ENCODE measurements at regions of chr3 and their contacts with region 1.

Region 1: DNA sequence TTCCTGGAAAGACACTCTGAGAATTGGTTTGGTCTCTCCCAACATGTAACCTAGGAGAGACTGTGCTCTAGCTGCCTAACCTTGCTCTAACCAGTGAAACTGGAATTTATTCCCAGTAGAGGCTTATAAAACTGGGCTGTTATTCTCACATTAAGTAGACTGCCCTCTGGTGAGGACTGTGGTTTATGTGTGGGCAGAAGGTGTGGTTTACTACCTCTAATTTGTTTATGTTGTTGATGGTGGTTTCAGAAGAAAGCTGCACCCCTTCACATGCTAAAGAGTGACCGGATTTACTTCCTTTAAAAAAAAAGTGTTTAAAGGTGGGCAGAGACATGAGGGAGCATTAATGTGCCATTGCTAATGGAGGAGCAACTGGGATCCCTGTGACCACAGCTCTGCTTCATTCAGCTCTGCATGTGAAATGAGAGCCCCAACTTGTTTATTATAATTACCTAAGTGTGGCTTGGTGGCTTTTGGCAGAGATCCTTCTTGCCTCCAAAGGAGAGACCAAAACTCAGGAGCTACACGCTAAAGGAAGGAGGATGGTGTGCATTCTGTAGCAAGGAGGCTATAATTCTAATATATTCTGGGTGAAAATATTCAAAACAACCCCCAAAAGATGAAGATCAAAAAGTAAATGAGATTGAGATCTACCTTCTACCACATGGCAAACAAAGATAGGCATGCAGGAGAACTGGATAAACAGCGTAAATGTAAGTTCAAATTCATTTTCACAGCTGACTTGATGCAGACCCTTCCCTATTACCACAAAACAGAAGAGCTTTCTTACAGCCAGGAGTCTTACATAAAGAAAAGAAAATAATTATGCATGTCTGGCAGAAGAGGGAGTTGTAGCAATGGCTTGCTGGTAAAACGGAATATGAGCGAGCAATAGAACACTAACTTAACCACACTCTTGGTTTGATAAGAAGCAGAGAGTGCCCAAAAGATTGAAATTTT is 273.0 kb downstream of the MECOM start:
- DNase-seq: peak; percentile 66
- H3K4me3 Mint-ChIP-seq: peak overlapping the region; percentile 41
- H3K27ac Mint-ChIP-seq: peak overlapping the region; percentile 94
- H3K4me1 Mint-ChIP-seq: peaks cover 47% of the 10 kb centered on the region
- H3K27me3 Mint-ChIP-seq: no peaks in the 10 kb centered on the region
- CTCF ChIP-seq: peak; percentile 50

Region 2: DNA sequence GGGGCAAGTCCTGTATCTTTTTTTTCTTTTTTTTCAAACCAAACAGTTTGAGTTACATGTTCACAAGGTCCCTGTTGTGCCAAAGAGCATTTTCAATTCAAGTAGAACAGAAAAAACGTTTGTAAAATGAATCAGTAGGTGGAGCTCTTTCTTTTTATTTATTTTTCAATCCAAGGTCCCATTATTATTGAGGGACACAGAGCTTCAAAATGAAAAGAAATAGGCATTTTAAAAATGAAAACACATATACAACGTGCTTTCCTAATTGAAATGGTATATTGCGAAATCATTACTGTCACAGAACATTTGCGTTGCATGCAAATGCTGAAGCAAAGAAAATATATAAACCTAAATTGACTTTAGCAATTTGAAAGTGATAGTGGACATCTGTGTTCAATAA is 438.0 kb before region 1 on chr3:
- CTCF ChIA-PET with region 1: interaction called, 5 read pairs
- intact Hi-C with region 1: loop called (anchors 2 kb)
- DNase-seq: no peak
- H3K4me3 Mint-ChIP-seq: no peak overlapping the region
- H3K27ac Mint-ChIP-seq: peak overlapping the region; percentile 84
- H3K4me1 Mint-ChIP-seq: peaks cover 62% of the 10 kb centered on the region
- H3K27me3 Mint-ChIP-seq: no peaks in the 10 kb centered on the region
- CTCF ChIP-seq: no peak

Region 3: GRCh38 chr3:169286214-169286613 is 104.3 kb before region 1 on chr3:
- CTCF ChIA-PET with region 1: interaction called, 8 read pairs
- intact Hi-C with region 1: loop called (anchors 2 kb)
- DNase-seq: peak; percentile 66
- H3K4me3 Mint-ChIP-seq: peak overlapping the region; percentile 68
- H3K27ac Mint-ChIP-seq: peak overlapping the region; percentile 98
- H3K4me1 Mint-ChIP-seq: peaks cover 54% of the 10 kb centered on the region
- H3K27me3 Mint-ChIP-seq: no peaks in the 10 kb centered on the region
- CTCF ChIP-seq: no peak

Region 4: DNA sequence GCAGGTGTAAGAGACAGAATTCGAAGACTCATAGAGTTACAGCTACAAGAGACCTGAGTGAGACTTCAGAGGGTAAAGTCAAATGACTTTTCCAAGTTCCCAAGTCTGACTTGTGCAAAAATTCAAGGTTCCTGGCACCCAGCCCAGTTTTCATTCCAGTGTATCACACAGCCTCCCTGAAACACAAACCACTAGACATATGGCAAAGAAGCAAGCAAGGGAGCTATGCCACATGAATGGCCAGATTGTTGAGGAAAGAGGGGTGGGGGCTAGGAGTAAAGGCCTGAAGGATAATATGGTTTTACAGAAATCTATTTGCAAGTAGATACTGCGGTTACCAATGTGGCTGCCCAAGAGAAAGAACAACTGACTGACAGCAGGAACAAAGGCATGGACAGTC is 28.2 kb before region 1 on chr3:
- CTCF ChIA-PET with region 1: interaction called, 17 read pairs
- intact Hi-C with region 1: loop called (anchors 2 kb)
- DNase-seq: peak; percentile 87
- H3K4me3 Mint-ChIP-seq: peak overlapping the region; percentile 46
- H3K27ac Mint-ChIP-seq: peak overlapping the region; percentile 83
- H3K4me1 Mint-ChIP-seq: peaks cover 60% of the 10 kb centered on the region
- H3K27me3 Mint-ChIP-seq: no peaks in the 10 kb centered on the region
- CTCF ChIP-seq: no peak

Region 5: DNA sequence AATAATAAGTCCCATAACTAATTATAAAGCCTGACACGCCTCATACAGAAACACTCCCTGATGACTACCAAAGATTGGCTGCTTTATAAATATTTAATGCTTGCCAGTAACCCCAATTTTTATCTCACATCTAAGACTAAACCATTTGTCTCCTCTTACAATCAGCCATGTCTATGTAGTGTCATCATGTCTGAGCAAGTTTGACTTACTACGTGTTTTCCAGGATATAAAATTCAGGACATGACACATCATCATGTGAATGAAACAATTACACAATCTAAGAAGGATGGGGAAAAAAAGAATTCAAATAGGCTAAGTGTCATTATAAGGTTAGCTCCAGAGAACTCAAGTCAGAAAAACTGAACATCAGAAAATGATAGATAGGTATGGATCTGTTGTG is 64.3 kb after region 1 on chr3:
- CTCF ChIA-PET with region 1: no interaction called
- intact Hi-C with region 1: no loop called
- DNase-seq: no peak
- H3K4me3 Mint-ChIP-seq: no peak overlapping the region
- H3K27ac Mint-ChIP-seq: peak overlapping the region; percentile 63
- H3K4me1 Mint-ChIP-seq: peaks cover 11% of the 10 kb centered on the region
- H3K27me3 Mint-ChIP-seq: no peaks in the 10 kb centered on the region
- CTCF ChIP-seq: no peak

Region 6: DNA sequence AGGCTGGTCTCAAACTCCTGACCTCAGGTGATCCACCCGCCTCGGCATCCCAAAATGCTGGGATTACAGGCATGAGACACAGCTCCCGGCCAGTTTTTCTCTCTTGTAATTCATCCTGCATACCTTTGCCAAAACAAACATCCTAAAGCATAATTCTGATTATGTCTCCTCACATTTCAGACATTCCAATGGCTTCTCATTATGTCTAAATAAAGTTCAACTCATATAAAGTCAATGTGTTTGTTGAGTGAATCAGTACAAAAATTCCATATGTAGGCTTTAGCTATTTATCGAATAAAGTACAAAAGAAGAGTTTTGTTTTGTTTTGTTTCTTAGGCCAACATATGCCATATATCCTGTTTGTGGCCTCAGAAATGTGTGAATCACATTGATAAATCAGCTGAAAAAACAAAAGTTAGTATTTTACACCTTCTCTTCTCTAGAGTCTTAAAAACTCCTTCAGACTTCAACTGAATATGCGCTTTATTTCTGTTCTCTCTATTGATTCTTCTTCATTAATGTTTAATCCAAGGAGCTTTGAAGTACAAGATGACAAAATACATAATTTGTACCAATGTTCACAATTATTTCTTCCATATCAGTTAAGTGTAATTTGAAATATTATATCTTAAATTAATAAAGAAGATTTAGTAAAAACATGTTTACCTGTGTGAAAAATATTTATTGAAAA is 107.2 kb after region 1 on chr3:
- CTCF ChIA-PET with region 1: interaction called, 6 read pairs
- intact Hi-C with region 1: loop called (anchors 1 kb)
- DNase-seq: peak; percentile 53
- H3K4me3 Mint-ChIP-seq: peak overlapping the region; percentile 22
- H3K27ac Mint-ChIP-seq: peak overlapping the region; percentile 82
- H3K4me1 Mint-ChIP-seq: peaks cover 65% of the 10 kb centered on the region
- H3K27me3 Mint-ChIP-seq: no peaks in the 10 kb centered on the region
- CTCF ChIP-seq: no peak

Region 7: GRCh38 chr3:169634618-169635239 is 244.2 kb after region 1 on chr3:
- CTCF ChIA-PET with region 1: no interaction called
- intact Hi-C with region 1: no loop called
- DNase-seq: peak; percentile 79
- H3K4me3 Mint-ChIP-seq: peak overlapping the region; percentile 13
- H3K27ac Mint-ChIP-seq: no peak overlapping the region
- H3K4me1 Mint-ChIP-seq: peaks cover 53% of the 10 kb centered on the region
- H3K27me3 Mint-ChIP-seq: no peaks in the 10 kb centered on the region
- CTCF ChIP-seq: no peak

Region 8: GRCh38 chr3:169668957-169669681 is 278.6 kb after region 1 on chr3:
- CTCF ChIA-PET with region 1: interaction called, 31 read pairs
- intact Hi-C with region 1: no loop called
- DNase-seq: peak; percentile 97
- H3K4me3 Mint-ChIP-seq: peak overlapping the region; percentile 79
- H3K27ac Mint-ChIP-seq: peak overlapping the region; percentile 60
- H3K4me1 Mint-ChIP-seq: peaks cover 30% of the 10 kb centered on the region
- H3K27me3 Mint-ChIP-seq: no peaks in the 10 kb centered on the region
- CTCF ChIP-seq: peak; percentile 95

Measured in Calu3 (cell line).